ENCODE measurements at regions of chr11 and their contacts with region 1.

Region 1: DNA sequence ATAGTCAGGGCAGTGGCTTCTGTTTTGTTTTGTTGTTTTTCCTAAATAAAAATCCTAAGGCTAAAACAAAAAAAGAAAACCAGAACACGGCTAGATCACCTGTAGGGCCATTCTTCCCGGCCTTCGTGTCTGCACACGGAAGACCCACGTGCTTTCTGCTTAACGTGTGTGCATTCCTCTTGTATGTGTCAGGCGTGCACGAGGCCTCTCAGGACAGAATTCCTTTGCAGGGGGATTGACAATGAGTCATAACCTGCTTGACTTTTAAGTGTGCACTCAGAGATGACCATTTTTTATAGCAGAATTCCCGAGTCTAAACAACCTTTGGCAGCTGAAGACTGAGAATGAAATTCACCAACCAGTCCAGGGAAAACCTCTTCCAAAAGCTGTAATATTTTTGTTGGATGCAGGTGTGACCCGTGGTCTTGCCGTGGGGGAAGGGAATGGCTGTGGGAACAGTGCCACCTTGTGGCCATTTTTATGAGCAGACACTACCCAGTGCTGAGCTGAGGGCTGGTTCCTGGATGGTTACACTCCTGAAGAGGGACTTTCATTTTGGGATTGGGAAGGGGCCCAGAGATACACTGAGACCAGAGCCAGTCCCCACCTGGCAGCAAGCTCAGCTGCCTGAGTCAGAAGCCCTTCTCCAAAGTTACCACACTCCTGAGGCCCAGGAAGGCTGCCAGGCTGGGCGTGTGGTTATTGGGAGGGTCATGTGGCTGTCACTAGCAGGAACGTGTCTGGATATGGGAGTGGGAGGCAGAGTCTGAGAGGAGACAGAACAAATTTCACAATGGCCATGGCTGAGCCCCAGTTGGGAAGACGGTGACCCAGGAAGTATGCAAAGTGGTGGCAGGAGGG is 35.8 kb upstream of the DKK3 start:
- DNase-seq: peak; percentile 94
- H3K4me3 ChIP-seq: no peak overlapping the region
- H3K27ac ChIP-seq: peak overlapping the region; percentile 69
- H3K4me1 ChIP-seq: peaks cover 41% of the 10 kb centered on the region
- H3K27me3 ChIP-seq: no peaks in the 10 kb centered on the region
- CTCF ChIP-seq: peak; percentile 78 to 91

Region 2: DNA sequence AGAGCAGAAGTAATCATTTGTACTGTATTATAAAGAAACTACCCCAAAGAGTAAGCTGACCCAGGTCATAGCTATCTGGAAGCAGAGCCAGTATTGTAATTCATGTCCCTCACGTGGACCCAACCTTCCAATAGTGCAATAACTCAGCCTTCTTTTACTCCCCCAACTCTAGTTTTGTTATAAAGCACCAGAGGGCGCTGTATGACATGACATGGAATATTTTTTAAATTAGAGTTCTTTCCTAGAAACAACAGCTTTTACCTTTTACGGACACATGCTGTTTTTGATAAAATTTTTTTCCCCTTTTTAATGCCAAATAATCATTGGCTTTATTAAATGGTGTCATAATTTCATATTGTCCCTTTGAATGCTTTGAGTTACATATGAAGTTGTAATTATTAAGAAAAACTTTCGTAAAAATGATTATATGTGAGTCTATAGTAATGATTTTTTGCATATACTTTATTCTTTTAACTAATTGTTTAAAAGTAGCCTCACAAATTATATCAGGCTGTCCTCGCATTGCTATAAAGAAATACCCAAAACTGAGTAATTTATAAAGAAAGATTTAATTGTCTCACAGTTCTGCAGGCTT is 112.6 kb before region 1 on chr11:
- CTCF ChIA-PET with region 1: no interaction called
- dilution Hi-C with region 1: no loop called
- in situ Hi-C with region 1: no loop called
- intact Hi-C with region 1: loop called (anchors 1 kb)
- DNase-seq: peak; percentile 54
- H3K4me3 ChIP-seq: no peak overlapping the region
- H3K27ac ChIP-seq: peak overlapping the region; percentile 1
- H3K4me1 ChIP-seq: no peaks in the 10 kb centered on the region
- H3K27me3 ChIP-seq: no peaks in the 10 kb centered on the region
- CTCF ChIP-seq: peak; percentile 53 to 60

Region 3: GRCh38 chr11:12008790-12009616 is 35.2 kb before region 1 on chr11:
- CTCF ChIA-PET with region 1: interaction called, 11 read pairs
- dilution Hi-C with region 1: no loop called
- in situ Hi-C with region 1: no loop called
- intact Hi-C with region 1: loop called (anchors 1 kb)
- DNase-seq: peak; percentile 36
- H3K4me3 ChIP-seq: peak overlapping the region; percentile 59 to 85 (median 77)
- H3K27ac ChIP-seq: peak overlapping the region; percentile 36
- H3K4me1 ChIP-seq: peaks cover 41% of the 10 kb centered on the region
- H3K27me3 ChIP-seq: no peaks in the 10 kb centered on the region
- CTCF ChIP-seq: no peak

Region 4: GRCh38 chr11:12087075-12088004 is 43.2 kb after region 1 on chr11:
- CTCF ChIA-PET with region 1: interaction called, 6 read pairs
- dilution Hi-C with region 1: loop called (anchors 5 kb)
- in situ Hi-C with region 1: no loop called
- intact Hi-C with region 1: loop called (anchors 1 kb)
- DNase-seq: peak; percentile 87
- H3K4me3 ChIP-seq: peak overlapping the region in 2 of 3 experiments; percentile 27 to 34
- H3K27ac ChIP-seq: peak overlapping the region; percentile 100
- H3K4me1 ChIP-seq: peaks cover 72% of the 10 kb centered on the region
- H3K27me3 ChIP-seq: no peaks in the 10 kb centered on the region
- CTCF ChIP-seq: peak; percentile 18 to 44

Region 5: GRCh38 chr11:12110201-12110713 is 66.1 kb after region 1 on chr11 and contains the start of gene MICAL2:
- CTCF ChIA-PET with region 1: interaction called, 4 read pairs
- dilution Hi-C with region 1: no loop called
- in situ Hi-C with region 1: no loop called
- intact Hi-C with region 1: loop called (anchors 2 kb)
- DNase-seq: peak; percentile 95
- H3K4me3 ChIP-seq: peak within 1 kb of the TSS; percentile 60 to 81 (median 76)
- H3K27ac ChIP-seq: peak within 1 kb of the TSS; percentile 95
- H3K4me1 ChIP-seq: peaks cover 37% of the 10 kb centered on the region
- H3K27me3 ChIP-seq: no peaks in the 10 kb centered on the region
- CTCF ChIP-seq: no peak
- total RNA-seq, gene MICAL2: 163 to 339 TPM

Region 6: DNA sequence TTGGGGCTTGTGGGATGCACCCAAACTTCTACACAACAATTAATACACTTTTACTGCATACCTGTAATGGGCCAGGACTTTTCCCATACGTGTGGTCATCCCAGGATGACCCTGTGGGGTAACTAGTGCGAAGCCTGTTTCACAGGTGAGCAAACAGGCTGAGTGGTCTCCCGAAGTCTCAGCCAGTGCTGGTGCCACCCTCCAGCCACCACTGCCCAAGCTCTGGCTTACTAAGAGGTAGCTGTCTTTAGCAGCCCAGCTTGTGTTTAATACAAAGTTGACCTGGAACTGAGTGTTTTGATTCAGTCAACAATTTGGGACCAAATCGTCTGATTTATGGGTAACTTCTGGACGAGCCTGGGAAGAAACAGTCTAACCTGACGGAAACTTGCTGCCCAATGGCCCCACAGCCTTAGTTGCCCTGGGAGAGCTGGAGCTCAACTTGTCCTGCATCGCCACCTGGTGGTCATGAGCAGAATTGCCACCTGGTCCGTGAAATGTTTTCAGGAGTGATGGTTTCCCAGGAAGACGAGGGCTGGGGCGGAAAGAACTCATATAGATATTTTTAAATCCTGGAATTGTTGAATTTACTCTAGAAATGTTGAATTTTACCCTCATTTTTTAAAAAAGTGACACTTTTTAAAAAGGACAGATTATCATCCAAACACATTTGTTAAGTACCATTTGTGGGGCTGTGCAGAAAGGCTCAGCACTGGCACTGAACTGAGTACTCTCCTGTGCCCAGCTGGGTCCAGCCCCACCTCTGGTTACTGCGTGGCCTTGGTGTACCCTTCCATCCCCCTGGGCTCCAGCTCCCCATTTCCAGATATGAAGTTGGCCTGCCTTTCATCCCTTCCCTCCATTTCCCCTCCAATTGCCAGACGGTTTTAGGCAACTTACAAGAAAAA is 237.6 kb after region 1 on chr11:
- CTCF ChIA-PET with region 1: interaction called, 3 read pairs
- dilution Hi-C with region 1: no loop called
- in situ Hi-C with region 1: no loop called
- intact Hi-C with region 1: loop called (anchors 1 kb)
- DNase-seq: peak; percentile 67
- H3K4me3 ChIP-seq: no peak overlapping the region
- H3K27ac ChIP-seq: no peak overlapping the region
- H3K4me1 ChIP-seq: peaks cover 44% of the 10 kb centered on the region
- H3K27me3 ChIP-seq: no peaks in the 10 kb centered on the region
- CTCF ChIP-seq: peak; percentile 93 to 96